A673 (cell line): ENCODE measurements at regions of chr6 and their contacts with region 1.

Region 1: DNA sequence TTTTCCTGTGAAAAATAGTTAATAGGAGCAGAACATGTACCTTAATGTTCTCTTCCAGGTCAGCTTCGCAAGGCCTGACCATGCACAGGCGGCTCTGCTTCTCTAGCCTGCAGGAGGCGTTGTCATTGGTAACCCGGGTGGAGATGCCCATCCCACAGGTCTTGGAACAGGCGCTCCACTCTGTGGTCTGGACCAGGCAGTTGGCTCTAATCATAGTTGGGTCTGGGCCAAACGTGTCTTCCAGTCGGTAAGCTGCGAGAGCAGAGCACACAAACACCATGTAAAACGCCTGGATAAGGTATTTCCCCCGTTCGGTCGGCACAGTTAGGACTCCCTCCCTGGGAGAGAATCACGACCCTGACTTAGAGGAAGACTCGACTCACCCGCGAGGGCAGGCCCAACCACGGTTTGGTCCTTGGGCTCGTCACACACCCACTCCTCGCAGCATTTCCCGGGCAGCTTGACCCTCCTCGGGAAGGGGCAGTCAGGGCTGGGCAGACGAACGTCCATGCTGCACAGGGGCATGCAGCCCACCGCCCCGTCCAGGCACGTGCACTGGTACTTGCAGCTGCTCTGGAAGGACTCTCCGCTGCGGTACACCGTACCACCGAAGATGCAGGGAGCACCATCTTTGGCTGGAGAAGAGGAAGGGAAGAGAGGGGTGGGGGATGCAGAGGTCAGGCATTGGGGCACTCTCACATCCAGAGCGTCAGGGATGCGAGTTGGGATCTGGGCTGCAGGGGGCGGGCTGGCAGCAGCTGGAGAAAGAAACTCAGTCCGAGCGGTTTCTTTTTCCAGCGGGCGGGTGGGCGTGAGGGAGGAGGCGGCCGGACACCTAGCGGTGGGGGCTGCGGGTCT is 1.0 kb downstream of the CCN2 start:
- DNase-seq: peak; percentile 83
- H3K4me3 ChIP-seq: peak overlapping the region; percentile 68
- H3K27ac ChIP-seq: peak overlapping the region; percentile 74
- H3K4me1 ChIP-seq: peaks cover 48% of the 10 kb centered on the region
- H3K27me3 ChIP-seq: no peaks in the 10 kb centered on the region
- CTCF ChIP-seq: peak; percentile 71

Region 2: GRCh38 chr6:132161283-132161682 is 211.1 kb after region 1 on chr6:
- CTCF ChIA-PET with region 1: no interaction called
- POLR2A ChIA-PET with region 1: no interaction called
- intact Hi-C with region 1: loop called (anchors 10 kb)
- DNase-seq: peak; percentile 64
- H3K4me3 ChIP-seq: no peak overlapping the region
- H3K27ac ChIP-seq: no peak overlapping the region
- H3K4me1 ChIP-seq: no peaks in the 10 kb centered on the region
- H3K27me3 ChIP-seq: no peaks in the 10 kb centered on the region
- CTCF ChIP-seq: peak; percentile 66

Region 3: DNA sequence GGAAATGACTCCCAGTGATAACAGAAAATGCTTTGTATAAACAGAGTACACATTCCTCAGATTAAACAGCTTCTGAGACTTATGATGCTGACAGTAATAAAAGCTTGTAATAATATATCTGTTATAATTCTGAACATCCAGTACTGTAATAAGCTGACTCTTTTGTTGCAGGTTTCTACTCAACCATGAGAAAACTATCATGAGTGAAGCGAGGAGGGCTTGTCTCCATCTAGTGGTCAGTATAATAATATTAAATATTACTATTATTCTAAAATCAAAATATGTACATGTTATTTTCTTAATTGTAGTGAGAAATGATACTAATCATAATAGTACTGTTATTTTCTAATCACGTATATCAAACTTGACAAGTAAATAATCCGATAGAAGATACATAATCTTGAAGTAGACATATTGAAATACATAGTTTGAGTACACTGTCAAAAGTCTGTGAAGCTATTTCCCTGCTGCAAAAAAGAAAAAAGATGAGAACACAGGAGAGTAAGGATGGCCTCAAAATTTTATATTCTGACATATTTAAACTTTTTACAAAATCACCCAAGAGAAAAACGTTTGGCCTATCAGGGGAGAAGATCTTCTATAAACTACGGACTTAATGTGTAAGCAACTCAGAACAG is 268.0 kb after region 1 on chr6:
- CTCF ChIA-PET with region 1: no interaction called
- POLR2A ChIA-PET with region 1: no interaction called
- intact Hi-C with region 1: loop called (anchors 10 kb)
- DNase-seq: peak; percentile 35
- H3K4me3 ChIP-seq: no peak overlapping the region
- H3K27ac ChIP-seq: no peak overlapping the region
- H3K4me1 ChIP-seq: no peaks in the 10 kb centered on the region
- H3K27me3 ChIP-seq: no peaks in the 10 kb centered on the region
- CTCF ChIP-seq: peak; percentile 64; the same call in 1 of the 2 replicates